Gastrocnemius medialis (tissue), 4 donors: ENCODE measurements at regions of chr7 and their contacts with region 1.

Region 1: DNA sequence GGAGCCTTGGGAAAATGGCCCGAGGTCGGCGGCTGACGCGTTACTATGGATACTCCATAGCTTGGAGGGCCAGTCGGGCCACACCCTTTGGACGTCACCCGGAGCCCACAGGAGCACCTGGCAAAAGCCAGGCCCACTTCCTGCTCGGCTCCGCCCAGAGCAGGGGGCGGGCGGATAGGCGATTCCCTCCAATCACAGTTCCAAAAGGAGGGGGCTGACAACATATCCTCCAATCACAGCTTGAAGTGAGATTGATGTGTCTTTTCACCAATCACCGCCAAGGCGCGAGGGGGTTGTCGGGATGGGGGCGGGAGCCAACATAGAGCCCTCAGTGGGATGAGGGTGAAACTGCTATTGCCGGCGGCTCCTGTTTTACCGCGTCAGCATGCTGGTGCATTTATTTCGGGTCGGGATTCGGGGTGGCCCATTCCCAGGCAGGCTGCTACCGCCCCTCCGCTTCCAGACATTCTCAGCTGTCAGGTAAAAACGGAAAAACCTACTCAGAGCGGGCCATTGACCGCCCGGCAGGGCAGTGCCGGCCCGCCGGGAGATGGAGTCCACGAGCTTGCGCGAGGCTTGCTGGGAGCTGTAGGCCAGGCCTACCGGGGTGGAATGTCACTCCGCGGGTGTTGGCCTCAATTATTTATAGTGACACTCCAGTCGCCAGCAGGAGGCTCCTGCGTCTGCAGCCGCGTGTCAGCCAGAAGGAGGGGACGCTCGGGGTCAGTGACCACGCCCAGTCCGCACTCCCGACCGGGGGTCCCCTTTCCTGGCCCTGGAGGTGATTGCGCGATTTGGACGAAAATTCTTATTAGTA is at the start of gene ABCB8:
- DNase-seq: peak; percentile 99 to 100
- ATAC-seq: peak; percentile 99 to 100
- H3K4me3 ChIP-seq: peak within 1 kb of the TSS; percentile 66 to 82 (median 74)
- H3K27ac ChIP-seq: peak within 1 kb of the TSS; percentile 87 to 94 (median 88)
- H3K4me1 ChIP-seq: peaks cover 9 to 12% of the 10 kb centered on the region in 2 donors
- H3K27me3 ChIP-seq: no peaks in the 10 kb centered on the region
- CTCF ChIP-seq: peak; percentile 49 to 77 (median 66)
- POLR2A ChIP-seq: peak; percentile 79 to 83
- total RNA-seq, gene ABCB8: 10.4 to 25.7 (median 16.2) TPM

Region 2: DNA sequence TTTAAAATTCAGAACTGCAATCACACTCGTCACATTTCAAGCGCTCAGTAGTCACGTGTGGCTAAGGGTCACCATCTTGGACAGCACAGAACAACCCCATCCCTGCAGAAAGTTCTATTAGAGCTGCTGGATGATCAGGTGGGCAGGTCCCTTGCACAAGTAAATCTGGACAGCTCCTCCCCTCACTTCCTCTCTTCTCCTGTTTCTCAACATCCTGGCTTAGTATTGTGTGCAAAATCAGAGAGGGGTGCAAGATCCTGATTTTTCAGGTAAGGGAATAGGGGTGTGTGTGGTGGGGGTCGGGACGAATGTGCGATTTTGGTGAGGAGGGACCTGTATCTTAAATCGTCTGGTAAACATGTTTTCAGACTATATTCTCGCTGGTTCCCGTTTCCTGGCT is 461.2 kb before region 1 on chr7 and contains the start of gene GIMAP4:
- in situ Hi-C with region 1: no loop called
- intact Hi-C with region 1: no loop called
- DNase-seq: no peak
- ATAC-seq: peak; percentile 56 to 68
- H3K4me3 ChIP-seq: peak within 1 kb of the TSS; percentile 40 to 53 (median 48)
- H3K27ac ChIP-seq: peak within 1 kb of the TSS; percentile 49 to 80 (median 73)
- H3K4me1 ChIP-seq: no peaks in the 10 kb centered on the region
- H3K27me3 ChIP-seq: no peaks in the 10 kb centered on the region
- CTCF ChIP-seq: no peak
- POLR2A ChIP-seq: peak in 1 of 2 donors; percentile 20
- total RNA-seq, gene GIMAP4: 11.9 to 16.9 (median 15.0) TPM

Region 3: GRCh38 chr7:150955519-150956394 is 72.6 kb before region 1 on chr7:
- in situ Hi-C with region 1: no loop called
- intact Hi-C with region 1: no loop called
- DNase-seq: no peak
- ATAC-seq: no peak
- H3K4me3 ChIP-seq: peak overlapping the region; percentile 25 to 31 (median 30)
- H3K27ac ChIP-seq: no peak overlapping the region
- H3K4me1 ChIP-seq: peaks cover 0 to 6% of the 10 kb centered on the region in 2 donors
- H3K27me3 ChIP-seq: no peaks in the 10 kb centered on the region
- CTCF ChIP-seq: no peak
- POLR2A ChIP-seq: no peak

Region 4: GRCh38 chr7:151057989-151058780 is 29.8 kb after region 1 on chr7:
- in situ Hi-C with region 1: no loop called
- intact Hi-C with region 1: loop called (anchors 1 kb)
- DNase-seq: peak; percentile 100
- ATAC-seq: peak; percentile 85 to 87
- H3K4me3 ChIP-seq: peak overlapping the region; percentile 71 to 92 (median 86)
- H3K27ac ChIP-seq: peak overlapping the region; percentile 93 to 99 (median 98)
- H3K4me1 ChIP-seq: peaks cover 22 to 44% of the 10 kb centered on the region in 2 donors
- H3K27me3 ChIP-seq: no peaks in the 10 kb centered on the region
- CTCF ChIP-seq: no peak
- POLR2A ChIP-seq: peak; percentile 84 to 99

Region 5: GRCh38 chr7:151085691-151086620 is 57.6 kb after region 1 on chr7 and contains the start of gene AGAP3:
- in situ Hi-C with region 1: no loop called
- intact Hi-C with region 1: loop called (anchors 1 kb)
- DNase-seq: peak; percentile 83 to 86
- ATAC-seq: peak; percentile 44 to 55
- H3K4me3 ChIP-seq: peak within 1 kb of the TSS; percentile 72 to 95 (median 84)
- H3K27ac ChIP-seq: peak within 1 kb of the TSS; percentile 86 to 96 (median 92)
- H3K4me1 ChIP-seq: peaks cover 44 to 56% of the 10 kb centered on the region in 2 donors
- H3K27me3 ChIP-seq: no peaks in the 10 kb centered on the region
- CTCF ChIP-seq: no peak
- POLR2A ChIP-seq: peak; percentile 79 to 85
- total RNA-seq, gene AGAP3: 31.1 to 65.3 (median 36.3) TPM

Region 6: DNA sequence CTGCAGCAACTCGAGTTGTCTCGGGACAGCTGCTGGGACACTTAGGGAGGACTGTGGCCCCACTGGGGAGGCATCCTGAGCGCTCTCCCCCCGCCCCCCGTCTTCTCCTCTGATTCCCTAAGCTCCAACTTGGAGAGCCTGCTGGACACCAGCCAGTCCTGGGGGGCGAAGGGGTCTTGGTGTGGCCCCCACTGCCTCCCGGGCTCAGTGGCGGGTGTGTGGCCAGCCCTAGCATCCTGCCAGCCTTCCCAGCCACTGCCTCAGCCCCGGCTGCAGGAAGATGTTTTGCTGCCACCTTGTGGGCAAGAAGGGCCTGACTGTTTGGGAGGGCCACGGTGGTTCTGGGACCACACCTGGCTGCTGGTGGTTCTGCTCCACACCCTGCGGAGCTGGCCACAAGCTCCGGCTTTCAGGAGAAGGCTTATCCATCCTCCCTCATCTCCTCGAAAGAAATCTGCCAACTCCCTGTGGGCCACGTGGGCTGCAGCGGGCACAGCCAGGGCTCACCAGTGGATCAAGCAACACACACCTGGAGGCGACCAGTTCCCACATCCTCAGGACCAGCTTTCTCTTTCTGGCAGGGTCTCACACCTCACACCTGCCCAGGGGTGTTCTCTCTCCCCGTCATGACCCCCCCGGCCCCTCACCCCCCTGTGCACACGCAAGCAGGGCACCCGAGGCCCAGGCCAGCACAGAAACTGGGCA is 82.8 kb after region 1 on chr7:
- in situ Hi-C with region 1: loop called in 2 of 4 experiments (anchors 10 kb)
- intact Hi-C with region 1: loop called (anchors 1 kb)
- DNase-seq: peak; percentile 54 to 66
- ATAC-seq: peak; percentile 87 to 89
- H3K4me3 ChIP-seq: no peak overlapping the region
- H3K27ac ChIP-seq: no peak overlapping the region
- H3K4me1 ChIP-seq: peaks cover 4 to 5% of the 10 kb centered on the region in 2 donors
- H3K27me3 ChIP-seq: no peaks in the 10 kb centered on the region
- CTCF ChIP-seq: peak; percentile 82 to 96 (median 89)
- POLR2A ChIP-seq: no peak

Region 7: DNA sequence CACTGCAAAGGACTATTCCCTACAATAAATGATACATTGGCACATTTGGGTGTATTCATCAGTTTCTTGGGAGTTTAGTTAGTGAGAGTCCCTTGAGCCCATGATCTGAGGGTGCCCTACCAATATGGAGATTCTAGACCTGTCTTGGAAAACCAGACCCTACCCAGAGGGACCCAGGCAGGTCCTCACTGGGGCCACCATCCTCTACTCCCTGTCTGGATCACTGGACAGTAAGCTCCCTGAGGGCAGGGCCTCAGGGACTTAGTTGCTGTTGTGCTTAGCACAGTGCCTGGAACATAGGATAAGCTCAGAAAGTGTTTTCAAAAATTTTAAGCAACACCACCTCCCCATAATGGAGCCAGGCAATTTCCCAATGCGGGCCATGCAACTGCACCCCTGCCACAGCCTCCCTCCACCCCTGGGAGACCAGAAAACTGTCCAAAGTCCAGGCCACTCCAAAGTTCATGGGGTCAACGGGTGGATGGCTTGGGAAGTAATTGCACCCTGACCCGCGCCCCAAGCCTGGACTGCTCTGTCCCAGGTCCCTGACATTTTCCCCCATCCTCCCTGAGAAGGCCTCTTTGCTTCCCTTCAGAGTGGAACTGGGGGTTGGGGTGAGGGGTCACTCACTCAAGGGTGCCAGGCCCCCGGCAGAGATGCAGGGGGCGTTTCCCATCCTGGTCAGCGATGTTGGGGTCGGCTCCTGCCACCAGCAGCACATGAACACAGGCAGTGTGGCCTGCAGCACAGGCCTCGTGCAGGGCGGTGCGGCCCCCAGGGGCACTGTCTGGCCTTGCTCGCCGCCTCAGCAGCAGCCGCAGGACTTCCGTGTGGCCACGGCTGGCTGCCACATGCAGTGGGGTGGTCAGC is 157.7 kb after region 1 on chr7:
- in situ Hi-C with region 1: no loop called
- intact Hi-C with region 1: loop called (anchors 5 kb)
- DNase-seq: peak in 1 of 2 donors; percentile 55
- ATAC-seq: peak; percentile 28 to 33
- H3K4me3 ChIP-seq: peak overlapping the region; percentile 57 to 62 (median 60)
- H3K27ac ChIP-seq: peak overlapping the region; percentile 91 to 100 (median 99)
- H3K4me1 ChIP-seq: peaks cover 32 to 41% of the 10 kb centered on the region in 2 donors
- H3K27me3 ChIP-seq: no peaks in the 10 kb centered on the region
- CTCF ChIP-seq: peak in 2 of 5 experiments; percentile 12 to 40
- POLR2A ChIP-seq: no peak